ENCODE measurements at regions of chr11 and their contacts with region 1.

Region 1: GRCh38 chr11:11798586-11799438 is 43.0 kb upstream of the USP47 start:
- DNase-seq: peak; percentile 67
- ATAC-seq: peak; percentile 74
- H3K4me3 Mint-ChIP-seq: no peak overlapping the region
- H3K27ac Mint-ChIP-seq: no peak overlapping the region
- H3K4me1 Mint-ChIP-seq: no peaks in the 10 kb centered on the region
- H3K27me3 Mint-ChIP-seq: peaks cover 21% of the 10 kb centered on the region
- CTCF ChIP-seq: peak; percentile 40

Region 2: GRCh38 chr11:11641581-11641980 is 157.2 kb before region 1 on chr11:
- CTCF ChIA-PET with region 1: no interaction called
- POLR2A ChIA-PET with region 1: no interaction called
- intact Hi-C with region 1: no loop called
- DNase-seq: no peak
- ATAC-seq: no peak
- H3K4me3 Mint-ChIP-seq: no peak overlapping the region
- H3K27ac Mint-ChIP-seq: no peak overlapping the region
- H3K4me1 Mint-ChIP-seq: no peaks in the 10 kb centered on the region
- H3K27me3 Mint-ChIP-seq: peaks cover 27% of the 10 kb centered on the region
- CTCF ChIP-seq: no peak

Region 3: GRCh38 chr11:11808992-11809615 is 10.3 kb after region 1 on chr11:
- CTCF ChIA-PET with region 1: interaction called, 11 read pairs
- POLR2A ChIA-PET with region 1: no interaction called
- intact Hi-C with region 1: no loop called
- DNase-seq: no peak
- ATAC-seq: no peak
- H3K4me3 Mint-ChIP-seq: no peak overlapping the region
- H3K27ac Mint-ChIP-seq: no peak overlapping the region
- H3K4me1 Mint-ChIP-seq: no peaks in the 10 kb centered on the region
- H3K27me3 Mint-ChIP-seq: peaks cover 11% of the 10 kb centered on the region
- CTCF ChIP-seq: no peak

Region 4: DNA sequence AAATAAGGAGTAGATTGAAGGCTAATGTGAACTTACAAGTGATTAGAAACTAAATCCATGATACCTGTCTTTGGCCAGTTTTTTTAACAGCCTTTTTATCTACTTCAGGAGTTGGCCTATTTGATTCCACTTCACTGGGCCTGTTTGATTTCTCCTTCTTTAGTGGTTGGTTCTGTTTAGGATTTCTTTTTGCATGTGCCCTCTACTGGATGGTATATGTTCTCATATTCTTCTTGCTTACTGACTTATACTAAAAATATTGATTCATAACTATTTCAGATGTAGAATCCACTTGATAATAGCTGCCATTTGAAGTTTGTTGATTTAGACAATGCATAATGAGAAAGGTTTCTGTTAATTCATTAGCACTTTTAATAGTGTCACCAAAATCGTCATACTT is 96.9 kb after region 1 on chr11:
- CTCF ChIA-PET with region 1: no interaction called
- POLR2A ChIA-PET with region 1: no interaction called
- intact Hi-C with region 1: loop called (anchors 5 kb)
- DNase-seq: no peak
- ATAC-seq: no peak
- H3K4me3 Mint-ChIP-seq: no peak overlapping the region
- H3K27ac Mint-ChIP-seq: no peak overlapping the region
- H3K4me1 Mint-ChIP-seq: no peaks in the 10 kb centered on the region
- H3K27me3 Mint-ChIP-seq: no peaks in the 10 kb centered on the region
- CTCF ChIP-seq: no peak

Region 5: DNA sequence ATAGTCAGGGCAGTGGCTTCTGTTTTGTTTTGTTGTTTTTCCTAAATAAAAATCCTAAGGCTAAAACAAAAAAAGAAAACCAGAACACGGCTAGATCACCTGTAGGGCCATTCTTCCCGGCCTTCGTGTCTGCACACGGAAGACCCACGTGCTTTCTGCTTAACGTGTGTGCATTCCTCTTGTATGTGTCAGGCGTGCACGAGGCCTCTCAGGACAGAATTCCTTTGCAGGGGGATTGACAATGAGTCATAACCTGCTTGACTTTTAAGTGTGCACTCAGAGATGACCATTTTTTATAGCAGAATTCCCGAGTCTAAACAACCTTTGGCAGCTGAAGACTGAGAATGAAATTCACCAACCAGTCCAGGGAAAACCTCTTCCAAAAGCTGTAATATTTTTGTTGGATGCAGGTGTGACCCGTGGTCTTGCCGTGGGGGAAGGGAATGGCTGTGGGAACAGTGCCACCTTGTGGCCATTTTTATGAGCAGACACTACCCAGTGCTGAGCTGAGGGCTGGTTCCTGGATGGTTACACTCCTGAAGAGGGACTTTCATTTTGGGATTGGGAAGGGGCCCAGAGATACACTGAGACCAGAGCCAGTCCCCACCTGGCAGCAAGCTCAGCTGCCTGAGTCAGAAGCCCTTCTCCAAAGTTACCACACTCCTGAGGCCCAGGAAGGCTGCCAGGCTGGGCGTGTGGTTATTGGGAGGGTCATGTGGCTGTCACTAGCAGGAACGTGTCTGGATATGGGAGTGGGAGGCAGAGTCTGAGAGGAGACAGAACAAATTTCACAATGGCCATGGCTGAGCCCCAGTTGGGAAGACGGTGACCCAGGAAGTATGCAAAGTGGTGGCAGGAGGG is 245.4 kb after region 1 on chr11:
- CTCF ChIA-PET with region 1: interaction called, 18 read pairs
- POLR2A ChIA-PET with region 1: no interaction called
- intact Hi-C with region 1: loop called (anchors 1 kb)
- DNase-seq: peak; percentile 34
- ATAC-seq: peak; percentile 66
- H3K4me3 Mint-ChIP-seq: no peak overlapping the region
- H3K27ac Mint-ChIP-seq: no peak overlapping the region
- H3K4me1 Mint-ChIP-seq: no peaks in the 10 kb centered on the region
- H3K27me3 Mint-ChIP-seq: peaks cover 6% of the 10 kb centered on the region
- CTCF ChIP-seq: peak; percentile 65

Region 6: DNA sequence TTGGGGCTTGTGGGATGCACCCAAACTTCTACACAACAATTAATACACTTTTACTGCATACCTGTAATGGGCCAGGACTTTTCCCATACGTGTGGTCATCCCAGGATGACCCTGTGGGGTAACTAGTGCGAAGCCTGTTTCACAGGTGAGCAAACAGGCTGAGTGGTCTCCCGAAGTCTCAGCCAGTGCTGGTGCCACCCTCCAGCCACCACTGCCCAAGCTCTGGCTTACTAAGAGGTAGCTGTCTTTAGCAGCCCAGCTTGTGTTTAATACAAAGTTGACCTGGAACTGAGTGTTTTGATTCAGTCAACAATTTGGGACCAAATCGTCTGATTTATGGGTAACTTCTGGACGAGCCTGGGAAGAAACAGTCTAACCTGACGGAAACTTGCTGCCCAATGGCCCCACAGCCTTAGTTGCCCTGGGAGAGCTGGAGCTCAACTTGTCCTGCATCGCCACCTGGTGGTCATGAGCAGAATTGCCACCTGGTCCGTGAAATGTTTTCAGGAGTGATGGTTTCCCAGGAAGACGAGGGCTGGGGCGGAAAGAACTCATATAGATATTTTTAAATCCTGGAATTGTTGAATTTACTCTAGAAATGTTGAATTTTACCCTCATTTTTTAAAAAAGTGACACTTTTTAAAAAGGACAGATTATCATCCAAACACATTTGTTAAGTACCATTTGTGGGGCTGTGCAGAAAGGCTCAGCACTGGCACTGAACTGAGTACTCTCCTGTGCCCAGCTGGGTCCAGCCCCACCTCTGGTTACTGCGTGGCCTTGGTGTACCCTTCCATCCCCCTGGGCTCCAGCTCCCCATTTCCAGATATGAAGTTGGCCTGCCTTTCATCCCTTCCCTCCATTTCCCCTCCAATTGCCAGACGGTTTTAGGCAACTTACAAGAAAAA is 483.0 kb after region 1 on chr11:
- CTCF ChIA-PET with region 1: interaction called, 5 read pairs
- POLR2A ChIA-PET with region 1: no interaction called
- intact Hi-C with region 1: loop called (anchors 2 kb)
- DNase-seq: peak; percentile 45
- ATAC-seq: peak; percentile 57
- H3K4me3 Mint-ChIP-seq: no peak overlapping the region
- H3K27ac Mint-ChIP-seq: no peak overlapping the region
- H3K4me1 Mint-ChIP-seq: no peaks in the 10 kb centered on the region
- H3K27me3 Mint-ChIP-seq: peaks cover 7% of the 10 kb centered on the region
- CTCF ChIP-seq: peak; percentile 89

Measured in activated B cell treated with CpG ODN at 0.5 μM for 24 hours (primary cell).